Endothelial cell of umbilical vein (primary cell): ENCODE measurements at regions of chr5 and their contacts with region 1.

Region 1: GRCh38 chr5:73519531-73520283 is 21.5 kb downstream of the BTF3 start:
- DNase-seq: peak; percentile 86
- H3K4me3 ChIP-seq: no peak overlapping the region
- H3K27ac ChIP-seq: no peak overlapping the region
- H3K4me1 ChIP-seq: no peaks in the 10 kb centered on the region
- H3K27me3 ChIP-seq: no peaks in the 10 kb centered on the region
- CTCF ChIP-seq: peak; percentile 78 to 82
- POLR2A ChIP-seq: no peak

Region 2: DNA sequence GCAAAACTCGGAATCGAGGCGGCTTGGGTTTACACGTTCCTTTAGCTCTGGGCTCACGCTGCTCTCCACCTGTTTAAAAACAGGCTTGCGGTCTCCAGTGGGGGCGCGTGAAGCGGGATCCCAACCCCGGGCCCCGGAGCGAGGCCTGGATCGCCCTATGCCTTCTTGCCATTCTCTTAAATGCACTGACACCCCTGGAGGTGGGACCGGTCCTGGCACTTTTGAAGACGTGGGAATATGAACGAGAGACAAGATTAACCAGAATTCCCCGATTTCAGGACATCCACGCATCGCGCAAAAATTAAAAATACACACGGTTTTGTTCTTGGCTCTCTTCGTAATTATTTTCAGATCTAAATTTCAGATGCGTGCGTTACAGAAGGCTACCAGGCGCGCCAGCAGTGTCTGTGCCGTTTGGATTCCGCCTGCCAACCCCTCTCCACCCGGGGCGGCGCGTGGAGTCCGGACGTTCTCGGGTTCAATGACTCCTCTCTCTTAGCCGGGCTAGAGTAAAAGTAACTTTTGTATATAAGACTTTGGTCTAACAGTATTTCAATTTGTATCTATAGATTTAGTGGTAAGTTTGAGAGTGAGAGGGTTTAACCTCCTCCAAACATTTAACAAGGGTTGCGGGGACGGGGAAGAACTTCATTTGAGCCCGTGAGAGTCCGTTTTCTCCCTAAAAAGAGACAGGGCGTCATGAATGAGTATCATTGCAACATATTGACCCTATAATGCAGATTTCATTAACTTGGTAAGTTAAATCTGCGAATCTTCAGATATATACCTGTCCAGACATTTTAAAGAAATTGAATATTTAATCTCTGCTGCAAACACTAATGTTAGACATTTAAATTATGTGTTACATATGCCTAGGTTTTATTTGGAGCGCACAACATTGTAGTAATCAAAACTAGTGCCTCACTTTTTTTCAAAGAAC is 74.9 kb before region 1 on chr5:
- CTCF ChIA-PET with region 1: no interaction called
- POLR2A ChIA-PET with region 1: no interaction called
- dilution Hi-C with region 1: no loop called
- intact Hi-C with region 1: no loop called
- DNase-seq: no peak
- H3K4me3 ChIP-seq: no peak overlapping the region
- H3K27ac ChIP-seq: no peak overlapping the region
- H3K4me1 ChIP-seq: peaks cover 7% of the 10 kb centered on the region
- H3K27me3 ChIP-seq: peaks cover 71 to 87% of the 10 kb centered on the region in 2 experiments
- CTCF ChIP-seq: no peak
- POLR2A ChIP-seq: no peak

Region 3: DNA sequence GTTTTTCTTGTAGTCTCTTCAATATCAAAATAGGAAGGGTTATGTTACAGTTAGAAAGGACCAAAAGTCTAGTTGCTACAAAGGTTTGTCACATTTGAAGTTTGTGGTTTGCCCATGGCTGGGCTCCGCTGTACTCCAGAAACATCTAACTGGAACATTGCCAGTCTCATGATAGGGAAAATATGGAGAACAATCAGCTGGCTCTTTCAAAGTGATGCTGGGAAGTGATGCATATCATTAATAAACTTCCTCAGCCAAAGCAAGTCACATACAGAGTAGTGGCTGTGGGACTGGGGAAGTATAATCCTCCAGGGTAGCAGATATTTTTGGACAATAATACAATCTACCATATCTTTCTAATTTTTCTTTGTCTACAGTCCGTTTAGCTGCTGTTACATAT is 12.6 kb before region 1 on chr5:
- CTCF ChIA-PET with region 1: interaction called, 14 read pairs
- POLR2A ChIA-PET with region 1: no interaction called
- dilution Hi-C with region 1: no loop called
- intact Hi-C with region 1: no loop called
- DNase-seq: peak; percentile 81
- H3K4me3 ChIP-seq: no peak overlapping the region
- H3K27ac ChIP-seq: peak overlapping the region; percentile 49
- H3K4me1 ChIP-seq: peaks cover 10% of the 10 kb centered on the region
- H3K27me3 ChIP-seq: no peaks in the 10 kb centered on the region
- CTCF ChIP-seq: no peak
- POLR2A ChIP-seq: no peak

Region 4: GRCh38 chr5:73534971-73535370 is 15.3 kb after region 1 on chr5:
- CTCF ChIA-PET with region 1: interaction called, 109 read pairs
- POLR2A ChIA-PET with region 1: no interaction called
- dilution Hi-C with region 1: no loop called
- intact Hi-C with region 1: loop called (anchors 1 kb)
- DNase-seq: no peak
- H3K4me3 ChIP-seq: no peak overlapping the region
- H3K27ac ChIP-seq: no peak overlapping the region
- H3K4me1 ChIP-seq: peaks cover 2% of the 10 kb centered on the region
- H3K27me3 ChIP-seq: peaks cover 6 to 24% of the 10 kb centered on the region in 2 experiments
- CTCF ChIP-seq: no peak
- POLR2A ChIP-seq: no peak

Region 5: GRCh38 chr5:73540192-73540591 is 20.5 kb after region 1 on chr5:
- CTCF ChIA-PET with region 1: interaction called, 109 read pairs
- POLR2A ChIA-PET with region 1: no interaction called
- dilution Hi-C with region 1: no loop called
- intact Hi-C with region 1: loop called (anchors 1 kb)
- DNase-seq: peak; percentile 38
- H3K4me3 ChIP-seq: no peak overlapping the region
- H3K27ac ChIP-seq: no peak overlapping the region
- H3K4me1 ChIP-seq: peaks cover 27% of the 10 kb centered on the region
- H3K27me3 ChIP-seq: no peaks in the 10 kb centered on the region
- CTCF ChIP-seq: no peak
- POLR2A ChIP-seq: no peak

Region 6: GRCh38 chr5:73565139-73565968 is 45.6 kb after region 1 on chr5 and contains the starts of genes ANKRA2 and UTP15:
- CTCF ChIA-PET with region 1: interaction called, 3 read pairs
- POLR2A ChIA-PET with region 1: no interaction called
- dilution Hi-C with region 1: no loop called
- intact Hi-C with region 1: loop called (anchors 1 kb)
- DNase-seq: peak; percentile 97
- H3K4me3 ChIP-seq: peak within 1 kb of the TSS; percentile 71 to 92 (median 84)
- H3K27ac ChIP-seq: peak within 1 kb of the TSS; percentile 63
- H3K4me1 ChIP-seq: peaks cover 18% of the 10 kb centered on the region
- H3K27me3 ChIP-seq: no peaks in the 10 kb centered on the region
- CTCF ChIP-seq: no peak
- POLR2A ChIP-seq: peak; percentile 61
- total RNA-seq, gene ANKRA2: 17.2 and 19.5 TPM in 2 replicates
- total RNA-seq, gene UTP15: 24.8 and 25.2 TPM in 2 replicates